Panc1 (cell line): ENCODE measurements at regions of chr14 and their contacts with region 1.

Region 1: DNA sequence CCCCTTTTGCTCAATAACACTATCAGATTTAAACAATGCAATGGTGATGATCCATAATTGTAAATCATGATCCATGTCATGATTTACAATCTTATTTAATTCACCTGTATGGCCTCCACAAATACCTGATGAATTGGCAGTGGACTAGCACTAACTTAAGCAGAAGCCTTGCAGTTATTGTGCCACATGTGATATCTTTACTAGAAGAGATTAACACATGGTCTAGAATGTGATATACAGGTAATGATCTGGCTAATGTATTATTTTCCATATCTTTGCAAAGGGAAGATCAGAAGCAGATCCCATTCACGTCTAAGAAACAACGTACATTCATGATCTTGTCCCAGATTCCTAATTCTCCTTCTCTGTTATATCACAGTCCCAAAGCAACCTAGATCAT is 66.0 kb downstream of the EGLN3 start:
- DNase-seq: no peak
- ATAC-seq: no peak
- H3K4me3 ChIP-seq: no peak overlapping the region
- H3K27ac ChIP-seq: no peak overlapping the region
- H3K4me1 ChIP-seq: no peaks in the 10 kb centered on the region
- H3K27me3 ChIP-seq: no peaks in the 10 kb centered on the region
- CTCF ChIP-seq: no peak

Region 2: GRCh38 chr14:33897878-33898535 is 13.1 kb after region 1 on chr14:
- CTCF ChIA-PET with region 1: no interaction called
- POLR2A ChIA-PET with region 1: interaction called, 15 read pairs
- in situ Hi-C with region 1: no loop called
- intact Hi-C with region 1: no loop called
- DNase-seq: no peak
- ATAC-seq: no peak
- H3K4me3 ChIP-seq: no peak overlapping the region
- H3K27ac ChIP-seq: no peak overlapping the region
- H3K4me1 ChIP-seq: no peaks in the 10 kb centered on the region
- H3K27me3 ChIP-seq: no peaks in the 10 kb centered on the region
- CTCF ChIP-seq: no peak